ENCODE measurements at regions of chr5 and their contacts with region 1.

Region 1: GRCh38 chr5:115100319-115100955 is 69.3 kb downstream of the TRIM36 start:
- DNase-seq: peak in 2 of 42 donors; percentile 6 to 51

Region 2: GRCh38 chr5:115246361-115246991 is 146.0 kb after region 1 on chr5:
- intact Hi-C with region 1: loop called (anchors 5 kb)
- DNase-seq: peak in 1 of 42 donors; percentile 16